ENCODE measurements at regions of chr16 and their contacts with region 1.

Region 1: GRCh38 chr16:75043175-75043895 is 44.5 kb downstream of the ZNRF1 start:
- DNase-seq: no peak
- ATAC-seq: peak in 1 of 8 donors; percentile 18
- H3K4me3 ChIP-seq: no peak overlapping the region
- H3K27ac ChIP-seq: peak overlapping the region in 9 of 10 donors; percentile 1 to 84 (median 71)
- H3K4me1 ChIP-seq: peaks cover 22 to 70% (median 58%) of the 10 kb centered on the region in 9 donors
- H3K27me3 ChIP-seq: no peaks in the 10 kb centered on the region
- CTCF ChIP-seq: no peak

Region 2: GRCh38 chr16:74998481-74999218 is 44.7 kb before region 1 on chr16 and contains the start of gene ZNRF1:
- intact Hi-C with region 1: loop called in 8 of 10 experiments (anchors 5 kb)
- DNase-seq: peak; percentile 89 to 90
- ATAC-seq: peak; percentile 85 to 93 (median 90)
- H3K4me3 ChIP-seq: peak within 1 kb of the TSS; percentile 73 to 100 (median 93)
- H3K27ac ChIP-seq: peak within 1 kb of the TSS; percentile 46 to 93 (median 87)
- H3K4me1 ChIP-seq: peaks cover 0 to 45% (median 31%) of the 10 kb centered on the region in 9 donors
- H3K27me3 ChIP-seq: no peaks in the 10 kb centered on the region
- CTCF ChIP-seq: peak; percentile 55 to 93 (median 81)
- total RNA-seq, gene ZNRF1: 16.7 to 30.8 (median 21.5) TPM

Region 3: GRCh38 chr16:75011634-75012307 is 31.6 kb before region 1 on chr16:
- intact Hi-C with region 1: no loop called
- DNase-seq: peak in 1 of 2 donors; percentile 38
- ATAC-seq: peak; percentile 56 to 94 (median 83)
- H3K4me3 ChIP-seq: peak overlapping the region in 1 of 10 donors; percentile 10
- H3K27ac ChIP-seq: peak overlapping the region; percentile 51 to 91 (median 74)
- H3K4me1 ChIP-seq: peaks cover 10 to 60% (median 35%) of the 10 kb centered on the region in 9 donors
- H3K27me3 ChIP-seq: no peaks in the 10 kb centered on the region
- CTCF ChIP-seq: no peak

Region 4: DNA sequence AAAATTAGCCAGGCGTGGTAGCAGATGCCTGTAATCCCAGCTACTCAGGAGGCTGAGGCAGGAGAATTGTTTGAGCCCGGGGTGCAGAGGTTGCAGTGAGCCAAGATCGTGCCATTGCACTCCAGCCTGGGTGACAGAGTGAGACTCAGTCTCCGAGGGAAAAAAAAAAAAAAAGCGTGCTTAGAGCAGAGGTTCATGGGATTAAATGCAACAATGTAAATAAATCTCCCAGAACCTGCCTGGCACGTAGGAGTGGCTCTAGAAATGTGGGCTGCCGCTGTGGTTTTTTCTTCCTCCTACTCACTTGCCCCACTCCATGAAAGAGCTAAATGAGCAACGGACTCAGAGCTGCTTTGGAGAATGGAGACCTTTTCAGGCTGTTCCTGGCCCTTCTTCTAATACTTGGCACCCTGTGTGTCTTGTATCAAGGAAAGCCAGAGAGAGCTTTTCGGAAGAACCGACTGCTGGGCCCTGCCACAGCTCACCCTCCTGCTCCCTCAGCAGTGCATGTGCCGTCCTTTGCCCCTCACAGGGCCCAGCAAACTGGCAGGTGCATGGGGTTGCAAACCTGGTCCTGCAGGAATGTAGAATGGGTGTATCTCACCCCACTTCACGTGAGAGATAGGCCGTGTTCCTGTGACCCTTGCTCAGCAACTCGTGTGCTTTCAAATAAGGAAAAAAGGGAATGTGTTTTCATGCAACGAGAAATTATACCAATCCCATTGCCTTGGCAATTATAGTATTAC is 21.2 kb after region 1 on chr16:
- intact Hi-C with region 1: loop called in 1 of 10 experiments (anchors 2 kb)
- DNase-seq: no peak
- ATAC-seq: no peak
- H3K4me3 ChIP-seq: no peak overlapping the region
- H3K27ac ChIP-seq: peak overlapping the region in 1 of 10 donors; percentile 15
- H3K4me1 ChIP-seq: peaks cover 8 to 68% (median 41%) of the 10 kb centered on the region in 9 donors
- H3K27me3 ChIP-seq: no peaks in the 10 kb centered on the region
- CTCF ChIP-seq: no peak

Region 5: GRCh38 chr16:75265845-75266701 is 222.7 kb after region 1 on chr16:
- intact Hi-C with region 1: no loop called
- DNase-seq: peak; percentile 72 to 82
- ATAC-seq: peak; percentile 41 to 74 (median 56)
- H3K4me3 ChIP-seq: peak overlapping the region; percentile 70 to 100 (median 86)
- H3K27ac ChIP-seq: peak overlapping the region; percentile 92 to 99 (median 96)
- H3K4me1 ChIP-seq: peaks cover 32 to 66% (median 53%) of the 10 kb centered on the region in 9 donors
- H3K27me3 ChIP-seq: peaks cover 0 to 63% (median 0%) of the 10 kb centered on the region in 7 donors
- CTCF ChIP-seq: no peak

Measured in heart right ventricle (tissue), 16 donors.